Sigmoid colon (tissue), 7 donors: ENCODE measurements at regions of chr12 and their contacts with region 1.

Region 1: DNA sequence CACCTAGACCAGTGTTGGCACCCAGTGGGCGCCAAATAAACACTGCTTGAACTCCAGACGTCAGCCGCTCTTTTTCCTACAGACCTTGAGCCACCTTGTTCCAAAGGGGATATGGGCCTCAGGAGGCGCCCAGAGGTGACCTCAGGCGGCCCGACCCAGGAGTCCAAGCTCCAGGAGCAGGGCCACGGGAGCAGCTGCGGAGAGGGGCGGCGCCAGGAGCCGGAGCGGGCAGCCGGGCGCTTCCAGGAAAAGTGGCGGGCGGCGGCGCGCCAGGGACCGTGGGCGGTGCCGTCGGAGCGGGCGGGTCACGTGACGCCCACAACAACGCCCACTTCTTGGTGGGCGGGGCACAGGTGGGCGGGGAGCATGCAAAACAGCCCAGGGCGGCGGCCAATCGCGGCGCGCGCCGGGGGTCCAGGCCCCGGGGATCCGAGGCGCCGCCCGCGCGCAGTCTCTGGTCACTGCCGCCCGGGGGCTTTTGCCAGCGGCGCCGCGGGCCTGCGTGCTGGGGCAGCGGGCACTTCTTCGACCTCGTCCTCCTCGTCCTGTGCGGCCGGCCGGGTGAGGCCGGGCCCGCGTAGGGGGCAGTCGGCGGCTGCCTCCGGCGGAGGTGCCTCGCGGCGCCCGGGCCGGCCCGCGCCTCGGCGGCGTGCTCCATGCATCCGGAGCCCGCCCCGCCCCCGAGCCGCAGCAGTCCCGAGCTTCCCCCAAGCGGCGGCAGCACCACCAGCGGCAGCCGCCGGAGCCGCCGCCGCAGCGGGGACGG is at the start of gene ORAI1:
- DNase-seq: peak; percentile 98
- H3K4me3 ChIP-seq: peak within 1 kb of the TSS; percentile 45 to 71 (median 67)
- H3K27ac ChIP-seq: peak within 1 kb of the TSS; percentile 89 to 95 (median 92)
- H3K4me1 ChIP-seq: peaks cover 0 to 43% (median 34%) of the 10 kb centered on the region in 4 donors
- H3K27me3 ChIP-seq: no peaks in the 10 kb centered on the region
- CTCF ChIP-seq: peak in 1 of 4 experiments; percentile 25
- EP300 ChIP-seq: peak in 1 of 4 donors; percentile 61
- POLR2A ChIP-seq: no peak
- total RNA-seq, gene ORAI1: 5.4 to 12.2 (median 9.0) TPM

Region 2: DNA sequence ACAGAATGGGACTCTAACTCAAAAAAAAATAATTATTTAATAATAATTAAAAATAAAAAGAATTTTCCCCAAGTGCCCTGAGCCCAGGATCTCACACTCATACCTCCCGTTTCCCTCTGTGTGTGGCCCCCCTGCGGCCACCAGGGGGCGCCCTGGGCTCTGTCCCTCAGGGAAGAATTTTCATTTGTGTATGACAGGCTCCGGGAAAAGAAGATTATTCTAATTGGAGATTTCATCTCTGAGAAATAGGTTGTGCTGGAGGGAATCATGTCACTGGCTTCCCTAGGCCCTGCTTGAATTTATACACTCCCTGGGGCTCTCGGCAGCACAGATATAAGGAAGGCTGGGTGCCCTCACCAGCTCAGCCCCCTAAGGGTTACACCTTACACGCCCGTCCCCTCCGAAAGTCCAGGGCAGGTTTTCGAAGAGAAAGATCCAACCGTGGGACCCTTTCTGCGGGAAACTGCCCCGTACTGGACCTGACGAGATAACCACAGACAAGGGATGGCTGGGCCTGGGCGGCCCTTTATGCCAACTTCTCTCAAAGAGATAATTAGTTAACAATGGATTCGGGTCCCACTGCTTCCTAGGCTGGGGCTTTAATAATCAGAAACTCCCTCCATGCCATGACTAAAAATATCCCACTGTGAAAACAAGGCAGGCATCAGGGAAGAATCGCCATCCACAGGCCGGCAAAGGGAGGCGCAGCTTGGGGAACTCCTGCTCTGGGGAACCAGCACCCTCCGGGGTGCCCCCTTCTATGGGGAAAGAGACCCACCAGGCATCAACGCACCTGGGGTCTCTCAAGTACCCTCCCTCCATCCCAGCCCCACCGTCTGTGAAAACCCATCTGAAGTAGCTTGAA is 126.1 kb before region 1 on chr12:
- intact Hi-C with region 1: loop called (anchors 5 kb)
- DNase-seq: peak; percentile 87
- H3K4me3 ChIP-seq: peak overlapping the region in 3 of 4 donors; percentile 21 to 39 (median 37)
- H3K27ac ChIP-seq: peak overlapping the region; percentile 73 to 78 (median 74)
- H3K4me1 ChIP-seq: peaks cover 0 to 9% (median 7%) of the 10 kb centered on the region in 4 donors
- H3K27me3 ChIP-seq: no peaks in the 10 kb centered on the region
- CTCF ChIP-seq: peak; percentile 68 to 96 (median 80)
- EP300 ChIP-seq: no peak
- POLR2A ChIP-seq: no peak

Region 3: DNA sequence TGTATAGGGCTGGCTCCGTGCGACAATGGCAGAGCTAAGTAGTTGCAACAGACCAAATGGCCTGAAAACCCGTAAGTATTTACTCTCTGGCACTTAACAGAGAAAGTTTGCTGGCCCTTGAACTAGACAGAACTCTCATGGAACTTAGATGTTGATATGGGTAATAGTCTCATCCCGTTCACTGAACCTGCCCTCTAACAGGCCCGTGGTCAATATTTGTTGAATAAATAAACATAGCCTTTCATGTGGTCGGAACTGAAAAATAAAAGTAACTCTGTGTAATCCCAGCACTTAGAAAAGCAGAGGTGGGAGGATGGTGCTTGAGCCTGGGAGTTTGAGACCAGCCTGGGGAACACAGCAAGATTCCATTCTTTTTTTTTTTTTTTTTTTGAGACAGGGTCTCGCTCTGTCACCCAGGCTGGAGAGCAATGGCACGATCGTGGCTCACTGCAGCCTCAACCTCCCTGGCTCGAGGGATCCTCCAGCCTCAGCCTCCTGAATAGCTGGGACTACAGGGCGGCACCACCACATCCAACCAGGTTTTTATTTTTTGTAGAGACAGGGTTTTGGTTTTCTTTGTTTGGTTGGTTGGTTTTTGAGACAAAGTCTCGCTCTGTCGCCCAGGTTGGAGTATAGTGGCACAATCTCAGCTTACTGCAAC is 75.2 kb before region 1 on chr12:
- intact Hi-C with region 1: loop called (anchors 2 kb)
- DNase-seq: no peak
- H3K4me3 ChIP-seq: no peak overlapping the region
- H3K27ac ChIP-seq: no peak overlapping the region
- H3K4me1 ChIP-seq: peaks cover 0 to 3% (median 0%) of the 10 kb centered on the region in 4 donors
- H3K27me3 ChIP-seq: no peaks in the 10 kb centered on the region
- CTCF ChIP-seq: no peak
- EP300 ChIP-seq: no peak
- POLR2A ChIP-seq: no peak

Region 4: DNA sequence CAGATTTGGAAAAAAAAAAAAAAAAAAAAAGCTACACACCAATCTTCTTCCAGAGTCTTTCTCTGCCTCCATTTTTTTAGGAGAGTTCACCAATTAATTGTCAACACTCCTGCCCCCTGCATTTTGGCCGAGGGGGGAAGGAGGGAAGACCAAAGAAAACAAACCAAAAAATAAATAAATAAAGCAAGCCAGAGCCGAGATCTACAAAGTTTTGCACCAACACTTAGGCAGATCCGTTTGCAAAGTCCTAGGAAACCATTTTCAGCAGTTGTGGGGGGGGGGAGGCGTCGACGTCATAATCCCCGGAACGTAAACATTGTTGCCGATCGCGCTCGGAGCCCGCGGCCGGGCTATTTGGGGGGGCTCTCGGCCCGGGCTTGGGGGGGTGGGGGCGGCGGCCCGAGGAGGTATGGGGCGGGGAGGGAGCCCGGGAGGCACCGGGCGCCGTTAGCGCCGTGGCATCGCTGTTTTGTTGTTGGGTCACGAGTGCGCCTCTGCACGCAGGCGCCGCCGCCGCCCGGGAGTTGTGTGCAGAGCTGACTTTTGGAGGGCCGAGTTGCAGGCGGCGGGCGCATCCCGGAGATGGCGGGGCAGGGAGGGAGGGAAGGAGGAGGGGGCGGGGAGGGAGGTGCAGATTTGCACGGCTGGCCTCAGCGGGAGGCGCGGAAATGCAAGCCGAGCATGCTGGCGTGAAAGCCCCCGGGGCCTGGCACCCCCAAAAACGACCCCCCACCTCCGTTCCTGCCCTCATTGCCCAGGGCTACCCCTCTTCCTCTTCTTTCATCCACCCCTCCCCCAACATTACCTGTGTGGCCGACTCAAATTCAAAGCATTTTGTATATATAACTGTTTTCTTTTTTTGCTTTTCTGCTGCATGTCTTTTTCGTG is 46.0 kb before region 1 on chr12:
- intact Hi-C with region 1: loop called (anchors 1 kb)
- DNase-seq: peak; percentile 88
- H3K4me3 ChIP-seq: peak overlapping the region; percentile 50 to 76 (median 72)
- H3K27ac ChIP-seq: peak overlapping the region; percentile 85 to 91 (median 86)
- H3K4me1 ChIP-seq: peaks cover 0 to 55% (median 41%) of the 10 kb centered on the region in 4 donors
- H3K27me3 ChIP-seq: no peaks in the 10 kb centered on the region
- CTCF ChIP-seq: no peak
- EP300 ChIP-seq: no peak
- POLR2A ChIP-seq: no peak

Region 5: GRCh38 chr12:121673003-121673511 is 46.8 kb after region 1 on chr12:
- intact Hi-C with region 1: loop called (anchors 5 kb)
- DNase-seq: peak; percentile 82
- H3K4me3 ChIP-seq: peak overlapping the region in 3 of 4 donors; percentile 38 to 49 (median 42)
- H3K27ac ChIP-seq: peak overlapping the region; percentile 30 to 76 (median 64)
- H3K4me1 ChIP-seq: peaks cover 0 to 19% (median 16%) of the 10 kb centered on the region in 4 donors
- H3K27me3 ChIP-seq: no peaks in the 10 kb centered on the region
- CTCF ChIP-seq: no peak
- EP300 ChIP-seq: no peak
- POLR2A ChIP-seq: no peak

Region 6: DNA sequence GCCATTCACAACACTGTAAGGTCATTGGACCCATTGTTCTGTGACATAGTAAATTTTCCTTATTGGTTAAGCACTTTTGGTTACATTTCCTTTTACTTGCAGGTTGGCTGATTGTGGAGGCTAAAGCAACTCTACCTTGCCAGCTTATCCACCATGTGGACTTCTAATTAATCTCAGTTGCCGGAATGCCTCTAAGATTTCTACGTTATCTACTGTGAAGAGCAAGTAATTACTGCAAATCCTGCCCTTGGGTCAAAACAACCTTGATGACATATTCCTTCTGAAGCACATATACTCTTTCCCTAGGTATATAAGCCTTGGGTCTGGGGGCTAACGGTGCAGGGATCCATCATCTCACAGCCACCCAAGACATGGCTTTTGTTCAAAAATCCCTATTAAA is 62.7 kb after region 1 on chr12:
- intact Hi-C with region 1: loop called (anchors 2 kb)
- DNase-seq: no peak
- H3K4me3 ChIP-seq: no peak overlapping the region
- H3K27ac ChIP-seq: no peak overlapping the region
- H3K4me1 ChIP-seq: peaks cover 0 to 12% (median 9%) of the 10 kb centered on the region in 4 donors
- H3K27me3 ChIP-seq: no peaks in the 10 kb centered on the region
- CTCF ChIP-seq: no peak
- EP300 ChIP-seq: no peak
- POLR2A ChIP-seq: no peak